ENCODE measurements at regions of chr2 and their contacts with region 1.

Region 1: DNA sequence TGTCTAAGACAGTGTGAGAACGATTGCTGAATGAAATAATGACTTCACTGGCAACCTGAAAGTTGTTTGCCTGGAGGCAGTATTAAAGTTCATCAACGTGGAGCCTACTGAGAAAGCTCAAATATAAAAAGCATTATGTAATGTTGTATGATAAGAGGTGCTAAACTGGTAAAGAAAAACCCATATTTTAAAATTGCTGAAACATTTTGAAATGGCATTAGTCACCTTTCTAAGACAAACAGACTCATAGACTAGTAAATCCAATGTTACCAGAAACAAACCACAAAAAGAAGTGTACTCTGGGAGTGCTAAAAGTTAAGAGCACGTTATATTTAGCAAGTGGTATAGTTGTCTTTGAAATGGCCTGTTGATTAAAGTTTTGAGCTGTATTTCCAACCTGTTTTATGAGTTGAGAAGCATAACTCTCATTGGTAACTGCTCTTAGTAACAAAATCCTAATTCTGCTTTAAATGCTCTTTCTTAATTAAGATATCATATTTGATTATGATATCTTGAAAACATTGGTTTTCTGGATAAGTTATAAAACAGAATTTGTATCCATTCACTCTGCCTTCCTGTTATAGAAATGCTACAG is 62.7 kb downstream of the CYP1B1 start:
- DNase-seq: no peak
- H3K4me3 ChIP-seq: no peak overlapping the region
- H3K27ac ChIP-seq: no peak overlapping the region
- H3K4me1 ChIP-seq: peaks cover 0 to 18% (median 2%) of the 10 kb centered on the region in 4 donors
- H3K27me3 ChIP-seq: no peaks in the 10 kb centered on the region
- CTCF ChIP-seq: no peak
- EP300 ChIP-seq: no peak
- POLR2A ChIP-seq: no peak

Region 2: DNA sequence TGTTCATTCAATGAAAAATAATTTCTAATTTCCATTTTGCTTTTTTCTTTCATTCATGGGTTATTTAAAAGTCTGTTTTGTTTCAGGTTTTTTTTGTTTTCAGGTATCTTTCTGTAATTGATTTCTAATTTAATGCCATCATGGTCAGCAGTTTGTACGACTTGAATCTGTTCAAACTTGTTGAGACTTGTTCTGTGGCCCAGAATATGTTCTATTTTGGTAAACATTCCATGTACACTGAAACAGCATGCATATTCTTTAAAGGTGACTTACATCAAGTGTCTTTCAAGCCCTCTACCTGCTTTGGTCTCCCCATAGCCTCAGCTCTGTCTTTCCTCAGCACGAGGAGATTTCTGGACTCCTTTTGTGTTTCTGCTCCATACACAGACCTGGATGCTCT is 13.6 kb after region 1 on chr2:
- in situ Hi-C with region 1: no loop called
- intact Hi-C with region 1: loop called (anchors 1 kb)
- DNase-seq: no peak
- H3K4me3 ChIP-seq: no peak overlapping the region
- H3K27ac ChIP-seq: no peak overlapping the region
- H3K4me1 ChIP-seq: no peaks in the 10 kb centered on the region
- H3K27me3 ChIP-seq: no peaks in the 10 kb centered on the region
- CTCF ChIP-seq: no peak
- EP300 ChIP-seq: no peak
- POLR2A ChIP-seq: no peak

Region 3: GRCh38 chr2:38037325-38037724 is 24.1 kb after region 1 on chr2:
- in situ Hi-C with region 1: no loop called
- intact Hi-C with region 1: no loop called
- DNase-seq: no peak
- H3K4me3 ChIP-seq: no peak overlapping the region
- H3K27ac ChIP-seq: no peak overlapping the region
- H3K4me1 ChIP-seq: no peaks in the 10 kb centered on the region
- H3K27me3 ChIP-seq: peaks cover 6% of the 10 kb centered on the region
- CTCF ChIP-seq: no peak
- EP300 ChIP-seq: no peak
- POLR2A ChIP-seq: no peak

Measured in transverse colon (tissue), 4 donors.